GM12878 (cell line): ENCODE measurements at regions of chr7 and their contacts with region 1.

Region 1: DNA sequence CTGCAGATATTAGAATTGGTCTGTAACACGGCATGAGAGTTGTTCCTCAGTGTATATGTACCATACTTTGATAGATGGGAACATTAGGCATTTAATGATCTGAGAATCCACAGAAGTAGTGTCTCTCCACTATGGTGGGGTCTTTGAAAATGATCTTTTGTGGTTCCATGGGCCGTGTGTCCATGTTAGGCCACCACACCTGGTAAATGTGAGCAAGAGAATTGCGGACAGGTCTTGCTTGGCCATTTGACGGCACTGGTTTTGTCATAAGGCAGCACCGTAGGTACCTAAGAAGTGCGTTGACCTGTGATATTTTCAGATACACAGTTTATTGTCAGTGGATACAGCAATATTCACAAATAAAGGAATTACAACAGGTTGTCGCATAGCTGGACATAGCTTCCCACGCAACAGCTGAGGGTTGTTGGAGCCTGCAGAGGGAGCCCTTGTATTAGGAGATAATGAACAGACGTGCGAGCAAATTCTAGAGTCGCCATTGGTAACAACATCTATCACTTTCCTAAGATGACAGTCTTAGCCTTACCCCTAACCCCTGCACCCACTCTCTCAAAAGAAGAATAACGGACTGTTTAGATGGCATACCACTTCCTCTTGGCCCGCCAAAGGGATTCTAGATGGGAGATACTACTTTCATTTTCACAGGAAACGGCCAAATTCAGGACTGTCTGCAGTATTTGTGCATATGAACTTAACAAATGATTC is 111.4 kb downstream of the COL28A1 start:
- DNase-seq: peak; percentile 37
- ATAC-seq: peak; percentile 92
- H3K4me3 ChIP-seq: peak overlapping the region; percentile 41
- H3K27ac ChIP-seq: no peak overlapping the region
- H3K4me1 ChIP-seq: no peaks in the 10 kb centered on the region
- H3K27me3 ChIP-seq: no peaks in the 10 kb centered on the region
- CTCF ChIP-seq: peak; percentile 66 to 75 (median 66)
- EP300 ChIP-seq: no peak
- POLR2A ChIP-seq: no peak
- RAD21 ChIP-seq: peak; percentile 76

Region 2: DNA sequence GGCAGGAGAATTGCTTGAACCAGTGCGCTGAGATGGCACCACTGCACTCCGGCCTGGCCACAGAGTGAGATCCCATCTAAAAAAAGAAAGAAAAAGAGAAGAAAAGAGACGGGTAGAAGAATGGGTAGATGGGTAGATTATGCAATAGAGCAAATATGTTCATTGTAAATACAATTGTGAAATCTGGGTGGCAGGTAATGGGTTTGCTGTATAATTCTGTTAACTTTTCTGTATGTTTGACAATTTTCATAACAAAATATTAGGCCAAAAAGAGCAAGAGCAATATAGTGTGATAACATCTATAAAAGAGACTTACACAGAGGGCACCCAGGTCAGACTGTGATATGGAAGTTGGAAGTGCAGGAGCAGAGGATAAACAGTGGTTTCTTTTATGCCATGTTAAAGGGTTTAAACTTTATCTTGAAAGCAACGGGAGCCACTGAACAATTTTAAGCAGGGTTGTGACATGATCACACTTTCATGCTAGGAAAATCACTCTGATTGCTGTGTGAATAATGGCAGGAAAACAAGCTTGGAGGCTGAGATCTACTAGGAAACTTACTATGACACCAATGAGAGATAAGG is 118.0 kb after region 1 on chr7:
- CTCF ChIA-PET with region 1: interaction called, 9 read pairs
- POLR2A ChIA-PET with region 1: no interaction called
- RAD21 ChIA-PET with region 1: interaction called, 4 read pairs
- SMC1A ChIA-PET with region 1: interaction called, 9 read pairs
- in situ Hi-C with region 1: no loop called
- intact Hi-C with region 1: loop called (anchors 2 kb)
- DNase-seq: no peak
- ATAC-seq: no peak
- H3K4me3 ChIP-seq: no peak overlapping the region
- H3K27ac ChIP-seq: no peak overlapping the region
- H3K4me1 ChIP-seq: no peaks in the 10 kb centered on the region
- H3K27me3 ChIP-seq: no peaks in the 10 kb centered on the region
- CTCF ChIP-seq: no peak
- EP300 ChIP-seq: no peak
- POLR2A ChIP-seq: no peak
- RAD21 ChIP-seq: no peak

Region 3: GRCh38 chr7:8226501-8226900 is 802.2 kb after region 1 on chr7:
- CTCF ChIA-PET with region 1: interaction called, 7 read pairs
- POLR2A ChIA-PET with region 1: no interaction called
- RAD21 ChIA-PET with region 1: no interaction called
- SMC1A ChIA-PET with region 1: no interaction called
- in situ Hi-C with region 1: loop called (anchors 10 kb)
- intact Hi-C with region 1: no loop called
- DNase-seq: no peak
- ATAC-seq: no peak
- H3K4me3 ChIP-seq: no peak overlapping the region
- H3K27ac ChIP-seq: no peak overlapping the region
- H3K4me1 ChIP-seq: no peaks in the 10 kb centered on the region
- H3K27me3 ChIP-seq: peaks cover 0 to 1% of the 10 kb centered on the region in 2 experiments; a peak in 2 of 4 replicates
- CTCF ChIP-seq: no peak
- EP300 ChIP-seq: no peak
- POLR2A ChIP-seq: no peak
- RAD21 ChIP-seq: no peak